Activated CD4-positive, alpha-beta T cell treated with anti-CD3 and anti-CD28 coated beads for 36 hours (primary cell): ENCODE measurements at regions of chr9 and their contacts with region 1.

Region 1: DNA sequence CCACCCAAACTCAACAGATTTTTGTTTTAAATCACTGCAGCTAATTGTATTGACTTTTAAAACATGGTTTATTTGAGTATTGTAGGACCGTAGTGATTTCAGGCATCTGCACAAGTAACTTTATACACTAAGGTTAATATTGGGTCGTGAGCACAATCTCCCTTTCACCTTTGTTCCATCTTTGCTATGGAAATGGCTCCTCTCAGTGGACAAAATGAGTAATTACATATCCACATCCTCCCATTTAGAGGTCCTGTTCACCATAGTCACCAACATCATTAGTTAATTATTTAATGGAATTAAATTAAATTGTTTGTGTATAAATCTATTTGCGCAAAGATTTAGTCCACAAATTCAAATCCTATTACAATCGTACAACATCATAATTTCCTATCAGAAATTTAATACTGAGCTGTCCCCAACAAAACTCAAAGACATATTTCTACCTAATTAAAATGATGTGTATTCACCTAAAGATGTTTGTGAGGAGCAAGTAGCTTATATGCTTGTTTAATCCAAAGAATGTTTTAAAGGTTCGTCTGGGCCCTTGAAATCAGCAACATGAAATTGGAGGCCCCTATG is 173.0 kb upstream of the DAPK1 start:
- DNase-seq: no peak
- ATAC-seq: no peak
- H3K4me3 Mint-ChIP-seq: no peak overlapping the region
- H3K27ac Mint-ChIP-seq: no peak overlapping the region
- H3K4me1 Mint-ChIP-seq: no peaks in the 10 kb centered on the region
- H3K27me3 Mint-ChIP-seq: peaks cover 15% of the 10 kb centered on the region

Region 2: DNA sequence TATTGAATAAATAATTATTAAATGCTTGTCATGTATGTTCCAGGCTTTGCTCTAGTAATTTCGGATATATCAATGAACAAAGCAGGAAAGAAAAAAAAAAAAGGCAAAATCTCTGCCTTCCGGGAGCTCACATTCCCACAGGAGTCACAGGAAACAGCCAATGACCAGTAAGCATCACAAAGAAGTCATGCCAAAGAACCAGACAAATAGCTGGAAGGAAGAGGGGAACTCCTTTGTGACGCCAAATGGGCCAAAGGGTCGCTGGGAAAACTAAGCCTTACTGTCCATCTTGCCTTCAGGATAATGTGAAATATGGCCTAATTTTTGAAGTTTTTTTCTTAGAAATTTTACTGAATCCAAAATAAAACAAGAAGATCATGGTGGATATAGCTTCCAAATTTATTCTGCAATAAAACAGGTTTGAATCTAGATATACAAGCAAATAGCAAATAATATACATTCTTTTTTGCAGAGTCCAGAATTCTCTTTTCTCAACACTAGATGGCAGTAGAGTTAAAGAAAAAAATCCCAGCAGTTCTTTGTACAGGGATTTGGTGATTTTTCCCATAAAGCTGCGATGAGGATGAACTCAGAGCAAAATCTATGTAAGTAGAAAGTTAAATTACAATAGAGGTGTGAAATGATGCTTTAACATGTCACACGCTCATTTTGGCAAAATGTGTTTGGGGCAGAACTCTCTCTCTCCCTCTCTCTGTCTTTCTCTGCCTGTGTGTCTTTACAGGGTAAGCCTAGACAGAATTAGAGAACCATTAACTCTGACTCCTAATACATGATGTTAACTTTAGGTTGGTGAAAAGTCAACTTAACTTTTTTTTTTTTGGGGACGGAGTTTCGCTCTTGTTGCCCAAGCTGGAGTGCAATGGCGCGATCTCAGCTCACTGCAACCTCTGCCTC is 910.5 kb before region 1 on chr9:
- CTCF ChIA-PET with region 1: interaction called, 10 read pairs
- POLR2A ChIA-PET with region 1: no interaction called
- intact Hi-C with region 1: loop called (anchors 1 to 2 kb)
- DNase-seq: no peak
- ATAC-seq: no peak
- H3K4me3 Mint-ChIP-seq: no peak overlapping the region
- H3K27ac Mint-ChIP-seq: no peak overlapping the region
- H3K4me1 Mint-ChIP-seq: no peaks in the 10 kb centered on the region
- H3K27me3 Mint-ChIP-seq: peaks cover 14% of the 10 kb centered on the region

Region 3: GRCh38 chr9:86486891-86487837 is 837.5 kb before region 1 on chr9:
- CTCF ChIA-PET with region 1: interaction called, 8 read pairs
- POLR2A ChIA-PET with region 1: no interaction called
- intact Hi-C with region 1: loop called in 1 of 2 experiments (anchors 1 kb)
- DNase-seq: no peak
- ATAC-seq: no peak
- H3K4me3 Mint-ChIP-seq: no peak overlapping the region
- H3K27ac Mint-ChIP-seq: no peak overlapping the region
- H3K4me1 Mint-ChIP-seq: peaks cover 7% of the 10 kb centered on the region
- H3K27me3 Mint-ChIP-seq: no peaks in the 10 kb centered on the region

Region 4: DNA sequence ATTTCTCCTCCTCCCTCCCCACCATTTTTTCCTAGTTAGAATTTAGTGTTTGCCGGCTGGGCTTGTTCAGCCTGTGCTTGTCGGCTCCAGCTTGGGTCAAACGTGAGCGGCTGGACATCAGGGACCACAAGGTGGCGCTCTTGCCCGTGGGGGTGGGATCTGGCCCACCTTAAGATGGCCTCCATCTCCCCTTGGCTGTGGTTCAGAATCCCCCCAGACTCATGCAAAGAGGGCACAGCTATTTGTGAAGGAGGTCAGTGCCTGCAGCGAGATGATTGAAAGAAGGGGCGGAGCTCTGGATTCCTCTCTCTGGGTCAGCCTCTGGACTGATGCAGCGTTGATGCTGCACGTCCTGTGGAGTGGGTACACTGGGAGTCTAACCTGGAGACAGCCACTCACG is 687.2 kb before region 1 on chr9:
- CTCF ChIA-PET with region 1: no interaction called
- POLR2A ChIA-PET with region 1: no interaction called
- intact Hi-C with region 1: loop called (anchors 5 kb)
- DNase-seq: peak; percentile 50
- ATAC-seq: no peak
- H3K4me3 Mint-ChIP-seq: no peak overlapping the region
- H3K27ac Mint-ChIP-seq: no peak overlapping the region
- H3K4me1 Mint-ChIP-seq: no peaks in the 10 kb centered on the region
- H3K27me3 Mint-ChIP-seq: peaks cover 17% of the 10 kb centered on the region

Region 5: DNA sequence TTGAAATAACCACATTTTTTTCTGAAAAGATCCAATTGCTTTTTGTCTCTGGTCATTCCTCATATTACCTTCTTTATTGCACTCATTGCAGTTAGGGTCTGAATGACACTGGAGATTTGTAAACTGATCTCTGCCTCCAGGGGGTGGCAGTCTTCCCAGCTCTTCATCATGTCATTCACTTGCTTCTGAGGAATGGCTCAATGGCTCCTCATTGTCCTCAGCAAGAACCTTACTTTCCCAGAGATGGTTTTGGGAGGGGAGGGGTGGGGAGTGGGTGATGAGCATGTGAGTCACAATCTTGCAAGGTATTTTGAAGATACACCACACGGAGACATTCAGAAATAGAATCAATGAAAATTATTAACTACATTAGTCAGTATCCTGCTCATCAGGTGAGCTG is 217.6 kb before region 1 on chr9:
- CTCF ChIA-PET with region 1: no interaction called
- POLR2A ChIA-PET with region 1: no interaction called
- intact Hi-C with region 1: loop called (anchors 5 kb)
- DNase-seq: no peak
- ATAC-seq: no peak
- H3K4me3 Mint-ChIP-seq: no peak overlapping the region
- H3K27ac Mint-ChIP-seq: no peak overlapping the region
- H3K4me1 Mint-ChIP-seq: no peaks in the 10 kb centered on the region
- H3K27me3 Mint-ChIP-seq: peaks cover 24% of the 10 kb centered on the region

Region 6: DNA sequence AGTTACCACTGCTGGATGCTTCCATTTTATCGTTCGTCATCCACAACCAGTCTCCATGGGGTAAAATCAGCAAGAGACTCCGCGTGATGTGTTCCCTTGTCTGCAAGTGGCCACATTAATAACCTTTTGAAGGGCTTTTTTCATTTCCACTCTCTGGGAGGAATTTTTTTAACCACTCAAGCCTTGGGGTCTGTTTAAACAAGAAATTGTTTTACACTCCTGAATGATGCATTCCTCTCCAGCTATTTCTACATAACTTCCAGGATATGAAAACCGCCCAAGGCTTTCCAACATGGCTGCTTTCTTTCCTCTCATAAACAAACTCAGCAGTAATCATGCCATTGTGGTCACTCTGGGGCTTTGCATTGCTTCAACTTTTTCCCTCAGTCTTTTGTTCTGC is 44.3 kb before region 1 on chr9:
- CTCF ChIA-PET with region 1: no interaction called
- POLR2A ChIA-PET with region 1: no interaction called
- intact Hi-C with region 1: no loop called
- DNase-seq: no peak
- ATAC-seq: no peak
- H3K4me3 Mint-ChIP-seq: no peak overlapping the region
- H3K27ac Mint-ChIP-seq: no peak overlapping the region
- H3K4me1 Mint-ChIP-seq: peaks cover 24% of the 10 kb centered on the region
- H3K27me3 Mint-ChIP-seq: peaks cover 13% of the 10 kb centered on the region